WTC11 (cell line): ENCODE measurements at regions of chr4 and their contacts with region 1.

Region 1: GRCh38 chr4:189090174-189090814 is 850.4 kb upstream of the FRG1 start:
- DNase-seq: peak; percentile 46
- ATAC-seq: peak; percentile 99
- H3K4me3 Mint-ChIP-seq: no peak overlapping the region
- H3K27ac Mint-ChIP-seq: no peak overlapping the region
- H3K4me1 Mint-ChIP-seq: peaks cover 27% of the 10 kb centered on the region
- H3K27me3 Mint-ChIP-seq: no peaks in the 10 kb centered on the region; the same call in 1 of the 2 replicates
- CTCF ChIP-seq: peak; percentile 29; the same call in 1 of the 2 replicates

Region 2: DNA sequence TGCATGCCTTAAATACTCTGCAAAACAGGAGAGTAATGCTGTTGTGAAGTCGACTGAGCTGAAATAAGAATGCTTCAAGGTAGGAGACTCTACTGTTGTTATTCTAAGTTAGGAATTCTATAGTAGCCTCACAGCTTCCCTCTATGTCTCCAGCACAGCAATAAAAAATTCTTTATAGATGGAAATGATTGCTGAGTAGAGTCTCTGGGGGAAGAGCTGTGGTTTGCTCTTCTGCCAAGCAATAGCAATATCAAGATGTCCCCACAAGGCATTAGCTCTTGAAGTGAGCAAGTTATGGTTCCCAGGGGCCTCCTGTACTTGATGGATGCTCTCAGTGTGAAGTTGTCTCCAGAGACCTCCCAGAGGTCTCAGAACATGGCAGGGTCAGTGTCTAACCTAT is 30.2 kb before region 1 on chr4:
- CTCF ChIA-PET with region 1: interaction called, 10 read pairs
- POLR2A ChIA-PET with region 1: no interaction called
- DNase-seq: no peak
- ATAC-seq: peak; percentile 90
- H3K4me3 Mint-ChIP-seq: no peak overlapping the region
- H3K27ac Mint-ChIP-seq: peak overlapping the region; percentile 97
- H3K4me1 Mint-ChIP-seq: peaks cover 35% of the 10 kb centered on the region
- H3K27me3 Mint-ChIP-seq: no peaks in the 10 kb centered on the region
- CTCF ChIP-seq: no peak

Region 3: DNA sequence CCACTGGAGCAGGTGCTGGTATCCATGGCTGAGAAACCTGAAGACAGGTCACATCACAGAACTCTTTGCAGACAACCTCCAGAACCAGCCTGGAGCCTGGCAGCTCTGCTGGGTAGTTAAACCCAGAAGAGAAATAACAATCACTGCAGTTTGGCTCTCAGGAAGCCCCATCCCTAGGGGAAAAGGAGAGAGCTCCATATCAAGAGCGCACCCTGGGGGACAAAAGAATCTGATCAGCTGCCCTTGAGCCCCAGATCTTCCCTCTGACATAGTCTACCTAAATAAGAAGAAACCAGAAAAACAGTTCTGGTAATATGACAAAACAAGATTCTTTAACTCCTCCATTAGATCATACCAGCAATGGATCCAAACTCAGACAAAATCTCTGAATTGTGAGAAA is 27.1 kb after region 1 on chr4:
- CTCF ChIA-PET with region 1: interaction called, 12 read pairs
- POLR2A ChIA-PET with region 1: no interaction called
- DNase-seq: peak; percentile 26
- ATAC-seq: peak; percentile 71
- H3K4me3 Mint-ChIP-seq: no peak overlapping the region
- H3K27ac Mint-ChIP-seq: no peak overlapping the region
- H3K4me1 Mint-ChIP-seq: peaks cover 11% of the 10 kb centered on the region
- H3K27me3 Mint-ChIP-seq: no peaks in the 10 kb centered on the region
- CTCF ChIP-seq: no peak

Region 4: DNA sequence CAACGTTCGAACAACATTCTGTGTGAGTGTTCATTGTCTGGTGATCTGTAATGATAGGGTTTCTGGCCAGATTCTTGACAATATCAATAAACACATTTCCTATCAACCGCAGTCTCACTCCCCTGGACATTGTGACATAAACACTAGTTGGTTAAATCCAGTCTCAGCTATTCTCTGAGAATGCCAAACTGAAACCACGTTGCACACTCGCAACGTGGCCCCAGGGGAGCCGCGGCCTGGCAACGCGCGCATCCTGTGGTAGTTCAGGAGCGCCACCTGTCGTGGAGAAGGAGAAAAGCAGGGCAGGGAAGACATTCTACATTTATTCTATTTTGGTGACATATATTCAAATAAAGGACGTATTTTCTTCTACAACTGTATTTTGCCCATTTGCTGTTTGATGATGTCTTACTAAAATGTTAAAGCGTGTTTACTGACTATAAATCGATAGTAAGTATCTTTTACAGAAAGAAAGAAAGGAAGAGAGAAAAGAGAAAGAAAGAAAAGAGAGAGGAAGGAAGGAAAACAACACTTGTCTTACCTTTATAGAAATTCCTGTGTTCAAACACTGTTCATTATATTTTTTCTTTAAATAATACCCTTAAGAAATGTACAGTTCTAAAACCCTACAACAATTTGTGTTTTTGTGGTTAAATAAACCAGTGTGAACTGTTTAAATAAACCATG is 112.0 kb after region 1 on chr4:
- CTCF ChIA-PET with region 1: interaction called, 11 read pairs
- POLR2A ChIA-PET with region 1: no interaction called
- DNase-seq: peak; percentile 52
- ATAC-seq: peak; percentile 87
- H3K4me3 Mint-ChIP-seq: no peak overlapping the region
- H3K27ac Mint-ChIP-seq: no peak overlapping the region
- H3K4me1 Mint-ChIP-seq: peaks cover 30% of the 10 kb centered on the region
- H3K27me3 Mint-ChIP-seq: no peaks in the 10 kb centered on the region; the same call in 1 of the 2 replicates
- CTCF ChIP-seq: peak; percentile 94